ENCODE measurements at regions of chr5 and their contacts with region 1.

Region 1: GRCh38 chr5:43556857-43557542 is at the start of gene PAIP1:
- DNase-seq: peak; percentile 95
- ATAC-seq: peak; percentile 73
- H3K4me3 ChIP-seq: peak within 1 kb of the TSS; percentile 66 to 83 (median 79)
- H3K4me3 Mint-ChIP-seq: peak within 1 kb of the TSS; percentile 93
- H3K27ac ChIP-seq: peak within 1 kb of the TSS; percentile 81 to 91
- H3K27ac Mint-ChIP-seq: peak within 1 kb of the TSS; percentile 92
- H3K4me1 ChIP-seq: peaks cover 14 to 31% of the 10 kb centered on the region in 2 donors
- H3K4me1 Mint-ChIP-seq: peaks cover 16% of the 10 kb centered on the region
- H3K27me3 ChIP-seq: no peaks in the 10 kb centered on the region
- H3K27me3 Mint-ChIP-seq: no peaks in the 10 kb centered on the region
- CTCF ChIP-seq: peak; percentile 87
- total RNA-seq, gene PAIP1: 31.8 and 35.9 TPM in 2 replicates

Region 2: GRCh38 chr5:41924872-41925554 is 1632.0 kb before region 1 on chr5 and contains the start of gene FBXO4:
- CTCF ChIA-PET with region 1: no interaction called
- POLR2A ChIA-PET with region 1: no interaction called
- intact Hi-C with region 1: loop called (anchors 10 kb)
- DNase-seq: peak; percentile 95
- ATAC-seq: peak; percentile 93
- H3K4me3 ChIP-seq: peak within 1 kb of the TSS; percentile 72 to 87 (median 77)
- H3K4me3 Mint-ChIP-seq: peak within 1 kb of the TSS; percentile 86
- H3K27ac ChIP-seq: peak within 1 kb of the TSS; percentile 96 to 98
- H3K27ac Mint-ChIP-seq: peak within 1 kb of the TSS; percentile 95
- H3K4me1 ChIP-seq: peaks cover 13 to 17% of the 10 kb centered on the region in 2 donors
- H3K4me1 Mint-ChIP-seq: peaks cover 27% of the 10 kb centered on the region
- H3K27me3 ChIP-seq: no peaks in the 10 kb centered on the region
- H3K27me3 Mint-ChIP-seq: no peaks in the 10 kb centered on the region
- CTCF ChIP-seq: peak; percentile 67
- total RNA-seq, gene FBXO4: 17.1 and 17.9 TPM in 2 replicates

Region 3: DNA sequence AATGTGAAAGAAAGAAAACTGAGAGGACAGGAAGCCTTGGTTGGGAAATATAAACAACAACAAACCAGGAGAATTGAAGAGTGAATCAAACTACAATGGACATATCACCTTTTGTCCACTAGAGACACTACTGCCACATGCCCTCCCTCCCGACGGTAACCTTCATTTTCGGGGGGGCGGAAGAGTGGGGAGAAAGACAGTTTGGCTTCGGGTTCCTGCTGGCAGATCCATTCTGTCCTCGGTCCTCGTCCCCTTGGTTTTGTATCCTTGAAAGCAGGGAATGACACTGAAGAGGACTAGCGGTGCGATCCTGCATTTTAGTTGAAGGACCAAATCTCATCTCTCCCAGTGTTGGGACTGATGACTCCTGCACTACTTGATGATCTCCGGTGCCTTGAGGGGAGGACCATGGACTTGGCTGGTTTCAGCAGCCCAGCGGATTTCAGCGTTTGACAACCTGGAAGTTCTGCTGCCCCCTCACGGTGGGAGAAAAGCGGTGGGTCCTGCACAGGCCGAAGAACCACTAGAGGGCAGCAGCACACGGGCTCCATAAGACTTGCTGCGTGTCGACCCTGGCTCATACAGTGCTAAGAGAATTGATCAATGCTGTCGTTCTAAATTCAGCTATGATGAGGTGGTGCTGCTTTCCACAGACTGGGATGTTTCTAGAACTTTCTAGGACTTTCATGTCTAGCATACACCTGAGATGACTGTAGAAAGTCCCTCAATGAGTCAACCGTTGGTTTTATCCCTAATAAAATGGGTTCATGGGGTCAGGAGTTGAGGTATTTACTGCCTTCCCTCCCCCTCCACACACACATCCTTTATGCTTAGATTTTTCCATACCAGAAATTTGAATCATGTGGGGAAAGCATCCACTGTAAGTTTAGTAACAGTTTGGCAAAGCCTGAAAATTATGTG is 451.4 kb before region 1 on chr5:
- CTCF ChIA-PET with region 1: no interaction called
- POLR2A ChIA-PET with region 1: no interaction called
- intact Hi-C with region 1: loop called (anchors 5 kb)
- DNase-seq: peak; percentile 94
- ATAC-seq: peak; percentile 97
- H3K4me3 ChIP-seq: peak overlapping the region; percentile 58 to 85 (median 66)
- H3K4me3 Mint-ChIP-seq: peak overlapping the region; percentile 90
- H3K27ac ChIP-seq: peak overlapping the region; percentile 49 to 71
- H3K27ac Mint-ChIP-seq: peak overlapping the region; percentile 83
- H3K4me1 ChIP-seq: peaks cover 0 to 12% of the 10 kb centered on the region in 2 donors
- H3K4me1 Mint-ChIP-seq: peaks cover 11% of the 10 kb centered on the region
- H3K27me3 ChIP-seq: no peaks in the 10 kb centered on the region
- H3K27me3 Mint-ChIP-seq: no peaks in the 10 kb centered on the region
- CTCF ChIP-seq: peak; percentile 100

Region 4: GRCh38 chr5:43514816-43515677 is 42.0 kb before region 1 on chr5 and contains the start of gene C5orf34:
- CTCF ChIA-PET with region 1: interaction called, 3 read pairs
- POLR2A ChIA-PET with region 1: no interaction called
- intact Hi-C with region 1: loop called (anchors 1 kb)
- DNase-seq: peak; percentile 93
- ATAC-seq: peak; percentile 99
- H3K4me3 ChIP-seq: peak within 1 kb of the TSS; percentile 78 to 93 (median 88)
- H3K4me3 Mint-ChIP-seq: peak within 1 kb of the TSS; percentile 94
- H3K27ac ChIP-seq: peak within 1 kb of the TSS; percentile 85 to 93
- H3K27ac Mint-ChIP-seq: peak within 1 kb of the TSS; percentile 88
- H3K4me1 ChIP-seq: peaks cover 12 to 18% of the 10 kb centered on the region in 2 donors
- H3K4me1 Mint-ChIP-seq: peaks cover 23% of the 10 kb centered on the region
- H3K27me3 ChIP-seq: no peaks in the 10 kb centered on the region
- H3K27me3 Mint-ChIP-seq: no peaks in the 10 kb centered on the region
- CTCF ChIP-seq: no peak
- total RNA-seq, gene C5orf34: 5.1 and 5.5 TPM in 2 replicates

Region 5: DNA sequence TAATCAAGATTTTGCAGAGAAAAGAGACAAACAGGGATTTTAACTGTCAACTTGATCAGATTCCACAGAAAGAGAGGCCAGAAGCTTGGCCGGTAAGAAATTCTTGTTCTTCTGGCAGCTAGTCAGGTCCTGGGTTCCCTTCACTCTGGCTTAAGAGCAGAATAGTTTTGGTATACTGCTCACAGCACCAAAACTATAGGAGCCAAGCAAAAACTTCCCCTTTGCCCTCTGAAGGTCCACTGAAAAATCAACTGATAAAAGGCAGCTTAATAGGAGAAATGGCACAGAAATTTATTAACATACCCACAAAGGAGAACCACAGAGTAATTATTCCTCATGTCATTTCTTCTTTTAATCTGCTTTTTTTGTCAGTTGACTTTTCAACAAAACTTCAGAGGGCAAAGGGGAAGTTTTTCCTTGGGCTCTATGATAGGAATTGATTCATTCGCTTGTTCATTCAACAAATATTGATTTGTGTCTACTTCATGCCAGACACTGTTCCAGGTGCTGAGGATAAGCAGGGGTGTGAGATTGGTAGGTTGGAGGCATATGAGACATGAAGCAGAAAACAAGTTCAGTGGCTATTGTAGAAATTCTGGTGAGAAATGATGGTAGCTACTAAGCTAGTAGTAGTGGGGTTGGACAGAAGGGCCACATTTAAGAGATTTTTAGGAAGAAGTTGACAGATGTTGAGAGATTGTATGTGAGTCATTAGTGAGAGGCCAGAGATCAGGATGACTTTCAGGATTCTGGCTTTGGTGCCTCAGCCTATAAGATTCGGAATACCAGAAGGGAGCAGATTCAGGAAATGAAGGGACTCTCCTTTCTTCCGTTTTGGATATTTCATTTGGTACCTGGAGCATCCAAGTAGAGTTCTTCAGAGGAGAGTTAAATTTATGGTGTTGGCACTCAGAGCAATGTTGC is 25.3 kb after region 1 on chr5:
- CTCF ChIA-PET with region 1: no interaction called
- POLR2A ChIA-PET with region 1: no interaction called
- intact Hi-C with region 1: no loop called
- DNase-seq: no peak
- ATAC-seq: no peak
- H3K4me3 ChIP-seq: no peak overlapping the region
- H3K4me3 Mint-ChIP-seq: no peak overlapping the region
- H3K27ac ChIP-seq: no peak overlapping the region
- H3K27ac Mint-ChIP-seq: no peak overlapping the region
- H3K4me1 ChIP-seq: no peaks in the 10 kb centered on the region
- H3K4me1 Mint-ChIP-seq: no peaks in the 10 kb centered on the region
- H3K27me3 ChIP-seq: no peaks in the 10 kb centered on the region
- H3K27me3 Mint-ChIP-seq: no peaks in the 10 kb centered on the region
- CTCF ChIP-seq: no peak

Region 6: DNA sequence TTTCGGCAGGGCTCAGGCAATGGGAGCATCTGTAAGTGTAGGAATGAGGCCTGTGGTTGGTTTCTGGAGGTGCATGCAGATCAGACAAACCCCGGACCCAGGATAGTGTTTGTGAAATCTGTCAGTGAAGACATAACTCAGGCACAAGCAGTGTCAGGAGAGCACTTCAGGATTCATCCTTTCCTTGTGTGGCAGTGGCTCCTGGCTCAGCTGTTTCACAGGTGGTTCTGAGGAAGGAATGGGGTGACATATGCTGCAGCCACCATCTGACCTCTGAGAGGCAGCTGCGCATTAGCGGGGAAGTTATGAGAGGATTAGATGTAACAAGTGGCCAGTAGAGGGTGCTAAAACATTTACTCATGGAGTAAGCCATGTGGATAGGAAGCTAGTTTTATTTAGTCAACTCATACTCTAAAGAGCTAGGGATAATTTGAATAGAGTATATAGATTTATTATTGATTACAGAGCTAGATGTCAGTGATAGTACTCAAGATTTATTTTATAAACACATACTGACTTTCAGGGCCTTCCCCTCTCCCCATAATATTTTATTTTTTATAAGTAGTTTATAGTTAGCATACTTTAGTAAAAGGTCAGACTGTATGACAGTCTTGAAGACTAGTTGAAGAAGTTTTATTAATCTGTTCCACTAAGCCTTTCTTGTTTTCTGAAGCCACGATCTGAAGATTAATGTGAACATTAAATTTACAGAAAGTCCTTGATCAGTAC is 74.3 kb after region 1 on chr5:
- CTCF ChIA-PET with region 1: no interaction called
- POLR2A ChIA-PET with region 1: no interaction called
- intact Hi-C with region 1: loop called (anchors 2 kb)
- DNase-seq: peak; percentile 63
- ATAC-seq: peak; percentile 67
- H3K4me3 ChIP-seq: no peak overlapping the region
- H3K4me3 Mint-ChIP-seq: no peak overlapping the region
- H3K27ac ChIP-seq: no peak overlapping the region
- H3K27ac Mint-ChIP-seq: no peak overlapping the region
- H3K4me1 ChIP-seq: no peaks in the 10 kb centered on the region
- H3K4me1 Mint-ChIP-seq: peaks cover 2% of the 10 kb centered on the region
- H3K27me3 ChIP-seq: no peaks in the 10 kb centered on the region
- H3K27me3 Mint-ChIP-seq: no peaks in the 10 kb centered on the region
- CTCF ChIP-seq: peak; percentile 71

Region 7: DNA sequence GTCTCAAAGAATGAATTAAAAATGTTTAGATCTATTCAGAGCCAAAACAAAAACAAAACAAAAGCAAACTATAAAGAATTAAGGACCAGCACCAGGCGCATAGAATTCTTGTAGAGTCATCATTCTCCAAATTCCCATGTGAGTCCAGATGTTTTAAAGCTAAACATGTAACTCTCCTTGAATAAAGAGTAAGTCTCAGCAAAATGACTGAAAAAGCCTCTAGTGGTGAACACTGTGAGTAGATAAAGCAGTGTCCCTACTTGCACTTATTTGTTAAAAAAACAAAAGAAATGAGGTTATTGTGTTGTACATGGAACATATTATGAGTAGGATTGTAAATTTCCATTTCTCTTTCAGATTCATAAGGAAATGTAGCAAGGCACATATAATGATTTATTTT is 90.0 kb after region 1 on chr5:
- CTCF ChIA-PET with region 1: no interaction called
- POLR2A ChIA-PET with region 1: no interaction called
- intact Hi-C with region 1: no loop called
- DNase-seq: no peak
- ATAC-seq: no peak
- H3K4me3 ChIP-seq: no peak overlapping the region
- H3K4me3 Mint-ChIP-seq: no peak overlapping the region
- H3K27ac ChIP-seq: no peak overlapping the region
- H3K27ac Mint-ChIP-seq: no peak overlapping the region
- H3K4me1 ChIP-seq: no peaks in the 10 kb centered on the region
- H3K4me1 Mint-ChIP-seq: no peaks in the 10 kb centered on the region
- H3K27me3 ChIP-seq: no peaks in the 10 kb centered on the region
- H3K27me3 Mint-ChIP-seq: no peaks in the 10 kb centered on the region
- CTCF ChIP-seq: no peak

Region 8: GRCh38 chr5:44943647-44944046 is 1386.6 kb after region 1 on chr5:
- CTCF ChIA-PET with region 1: no interaction called
- POLR2A ChIA-PET with region 1: no interaction called
- intact Hi-C with region 1: no loop called
- DNase-seq: no peak
- ATAC-seq: no peak
- H3K4me3 ChIP-seq: no peak overlapping the region
- H3K4me3 Mint-ChIP-seq: no peak overlapping the region
- H3K27ac ChIP-seq: no peak overlapping the region
- H3K27ac Mint-ChIP-seq: no peak overlapping the region
- H3K4me1 ChIP-seq: no peaks in the 10 kb centered on the region
- H3K4me1 Mint-ChIP-seq: no peaks in the 10 kb centered on the region
- H3K27me3 ChIP-seq: no peaks in the 10 kb centered on the region
- H3K27me3 Mint-ChIP-seq: no peaks in the 10 kb centered on the region
- CTCF ChIP-seq: no peak